CD4-positive, alpha-beta T cell (primary cell): ENCODE measurements at regions of chr16 and their contacts with region 1.

Region 1: GRCh38 chr16:4253394-4254150 is 11.7 kb upstream of the SRL start:
- DNase-seq: peak; percentile 99 to 100 (median 99)
- ATAC-seq: peak; percentile 94
- H3K4me3 ChIP-seq: peak overlapping the region; percentile 91
- H3K4me3 Mint-ChIP-seq: peak overlapping the region; percentile 96
- H3K27ac ChIP-seq: peak overlapping the region; percentile 86 to 88
- H3K27ac Mint-ChIP-seq: peak overlapping the region; percentile 96
- H3K4me1 ChIP-seq: peaks cover 18% of the 10 kb centered on the region
- H3K4me1 Mint-ChIP-seq: peaks cover 10% of the 10 kb centered on the region
- H3K27me3 ChIP-seq: no peaks in the 10 kb centered on the region
- H3K27me3 Mint-ChIP-seq: no peaks in the 10 kb centered on the region
- CTCF ChIP-seq: no peak

Region 2: GRCh38 chr16:3717235-3718018 is 536.1 kb before region 1 on chr16 and contains the start of gene TRAP1:
- CTCF ChIA-PET with region 1: no interaction called
- POLR2A ChIA-PET with region 1: interaction called, 12 read pairs
- intact Hi-C with region 1: loop called in 1 of 2 experiments (anchors 10 kb)
- DNase-seq: peak; percentile 83 to 96 (median 91)
- ATAC-seq: peak; percentile 98
- H3K4me3 ChIP-seq: peak within 1 kb of the TSS; percentile 98
- H3K4me3 Mint-ChIP-seq: peak within 1 kb of the TSS; percentile 92
- H3K27ac ChIP-seq: peak within 1 kb of the TSS; percentile 72 to 92
- H3K27ac Mint-ChIP-seq: peak within 1 kb of the TSS; percentile 89
- H3K4me1 ChIP-seq: peaks cover 33% of the 10 kb centered on the region
- H3K4me1 Mint-ChIP-seq: peaks cover 31% of the 10 kb centered on the region
- H3K27me3 ChIP-seq: no peaks in the 10 kb centered on the region
- H3K27me3 Mint-ChIP-seq: no peaks in the 10 kb centered on the region
- CTCF ChIP-seq: no peak
- total RNA-seq, gene TRAP1: 68.0 to 75.9 TPM

Region 3: DNA sequence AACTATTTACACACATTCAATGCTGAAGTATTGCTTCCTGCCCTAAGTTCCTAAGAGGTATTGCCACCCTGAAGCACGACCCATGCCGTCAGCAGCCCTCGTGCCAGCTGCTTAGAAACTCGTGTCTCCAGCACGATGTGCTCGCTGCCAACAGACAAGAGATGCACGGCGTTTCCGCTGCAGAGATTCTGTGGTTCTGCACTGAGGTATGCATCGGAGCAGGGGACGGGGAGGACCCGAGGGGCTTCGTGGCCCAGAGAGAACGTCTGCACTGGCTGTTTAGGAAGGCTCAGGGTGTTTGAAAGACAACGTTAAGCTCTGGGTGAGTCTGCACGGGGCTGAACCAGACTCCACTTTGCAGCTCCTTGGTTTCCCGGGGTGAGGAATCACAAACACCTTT is 290.4 kb before region 1 on chr16:
- CTCF ChIA-PET with region 1: interaction called, 10 read pairs
- POLR2A ChIA-PET with region 1: interaction called, 4 read pairs
- intact Hi-C with region 1: no loop called
- DNase-seq: peak in 13 of 14 experiments; percentile 14 to 89 (median 46)
- ATAC-seq: peak; percentile 78
- H3K4me3 ChIP-seq: no peak overlapping the region
- H3K4me3 Mint-ChIP-seq: peak overlapping the region; percentile 45
- H3K27ac ChIP-seq: peak overlapping the region in 1 of 2 donors; percentile 52
- H3K27ac Mint-ChIP-seq: peak overlapping the region; percentile 93
- H3K4me1 ChIP-seq: peaks cover 31% of the 10 kb centered on the region
- H3K4me1 Mint-ChIP-seq: peaks cover 28% of the 10 kb centered on the region
- H3K27me3 ChIP-seq: peaks cover 0 to 3% of the 10 kb centered on the region in 2 experiments
- H3K27me3 Mint-ChIP-seq: peaks cover 4% of the 10 kb centered on the region
- CTCF ChIP-seq: no peak

Region 4: DNA sequence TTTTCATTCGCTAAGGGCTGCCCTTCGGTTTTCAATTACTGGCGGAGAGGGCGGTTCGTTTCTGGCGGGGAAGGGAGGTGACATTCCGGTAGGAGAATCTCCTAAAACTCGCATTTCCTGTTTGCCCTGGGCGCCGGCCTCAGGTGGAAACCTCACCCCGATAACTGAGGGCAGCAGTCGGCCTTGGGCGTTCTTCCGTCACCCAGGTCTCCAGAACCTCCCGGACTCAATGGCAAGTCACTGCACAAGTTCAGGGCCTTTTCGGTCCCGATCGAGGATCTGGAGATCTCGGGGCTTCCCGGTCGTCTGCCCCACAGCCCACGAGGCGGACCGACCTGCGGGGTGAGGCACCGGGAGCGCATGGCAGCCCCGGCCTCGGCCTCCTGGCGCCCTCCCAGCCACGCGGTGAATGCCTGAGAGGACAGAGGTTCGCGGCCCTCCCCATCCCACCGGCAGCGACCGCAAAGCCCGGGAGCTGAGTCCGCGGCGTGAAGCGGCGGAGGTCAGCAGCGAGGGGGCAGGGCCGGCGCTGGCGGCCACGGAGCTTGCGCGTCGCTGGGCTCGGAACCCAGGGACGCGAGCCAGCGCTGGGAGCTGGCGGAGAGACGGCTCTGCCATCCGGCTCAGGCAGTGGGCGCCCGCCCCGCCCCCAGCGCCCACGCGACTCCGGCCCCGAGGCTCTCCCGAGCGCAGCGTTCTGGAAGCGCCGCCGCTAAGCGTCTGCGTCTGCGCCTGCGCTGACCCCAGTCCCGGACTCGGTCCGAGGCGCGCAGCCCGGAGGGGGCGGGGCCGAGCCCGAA is 70.1 kb before region 1 on chr16:
- CTCF ChIA-PET with region 1: interaction called, 3 read pairs
- POLR2A ChIA-PET with region 1: interaction called, 5 read pairs
- intact Hi-C with region 1: loop called in 1 of 2 experiments (anchors 5 kb)
- DNase-seq: peak; percentile 48 to 91 (median 81)
- ATAC-seq: peak; percentile 83
- H3K4me3 ChIP-seq: peak overlapping the region; percentile 64
- H3K4me3 Mint-ChIP-seq: peak overlapping the region; percentile 80
- H3K27ac ChIP-seq: no peak overlapping the region
- H3K27ac Mint-ChIP-seq: no peak overlapping the region
- H3K4me1 ChIP-seq: peaks cover 17% of the 10 kb centered on the region
- H3K4me1 Mint-ChIP-seq: peaks cover 9% of the 10 kb centered on the region
- H3K27me3 ChIP-seq: no peaks in the 10 kb centered on the region
- H3K27me3 Mint-ChIP-seq: no peaks in the 10 kb centered on the region
- CTCF ChIP-seq: no peak

Region 5: GRCh38 chr16:4307215-4308037 is 53.9 kb after region 1 on chr16:
- CTCF ChIA-PET with region 1: interaction called, 18 read pairs
- POLR2A ChIA-PET with region 1: interaction called, 21 read pairs
- intact Hi-C with region 1: loop called in 1 of 2 experiments (anchors 2 kb)
- DNase-seq: peak; percentile 91 to 99 (median 96)
- ATAC-seq: peak; percentile 87
- H3K4me3 ChIP-seq: peak overlapping the region; percentile 72
- H3K4me3 Mint-ChIP-seq: peak overlapping the region; percentile 84
- H3K27ac ChIP-seq: peak overlapping the region; percentile 82 to 90
- H3K27ac Mint-ChIP-seq: peak overlapping the region; percentile 96
- H3K4me1 ChIP-seq: peaks cover 31% of the 10 kb centered on the region
- H3K4me1 Mint-ChIP-seq: peaks cover 15% of the 10 kb centered on the region
- H3K27me3 ChIP-seq: no peaks in the 10 kb centered on the region
- H3K27me3 Mint-ChIP-seq: no peaks in the 10 kb centered on the region
- CTCF ChIP-seq: no peak

Region 6: DNA sequence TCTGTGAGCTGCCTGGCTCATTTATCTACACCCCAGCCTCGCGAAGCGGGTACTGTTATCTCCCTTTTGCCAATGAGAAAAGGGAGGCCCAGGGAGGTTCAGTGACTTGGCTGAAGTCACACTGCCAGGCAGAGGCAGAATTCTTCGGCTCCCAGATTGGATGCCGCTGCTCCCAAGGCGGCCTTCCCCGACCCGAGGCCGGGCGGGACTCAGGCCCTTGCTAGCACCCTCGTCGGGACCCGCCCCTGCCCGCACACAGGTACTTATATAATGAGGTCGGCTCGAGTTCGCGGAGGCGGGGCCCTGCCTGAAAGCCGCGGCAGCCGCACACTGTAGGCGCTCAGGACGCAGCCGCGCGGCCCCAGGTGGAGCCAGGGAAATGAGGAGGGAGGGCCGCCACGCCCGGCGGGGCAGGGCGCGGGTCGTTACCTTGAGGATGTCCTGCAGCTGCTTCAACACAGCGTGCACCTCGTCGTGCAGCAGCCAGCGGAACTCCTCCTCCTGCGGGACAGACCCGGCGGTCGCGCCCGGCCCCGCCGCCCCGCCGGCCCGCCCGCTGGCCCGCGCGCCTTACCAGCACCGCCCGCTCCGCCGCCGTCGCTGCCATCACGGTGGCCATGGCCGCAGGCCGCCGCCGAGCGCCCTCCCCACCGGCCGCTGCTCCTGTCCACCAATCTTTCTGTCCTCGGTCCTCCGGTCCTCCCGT is 548.5 kb after region 1 on chr16 and contains the start of gene ROGDI:
- CTCF ChIA-PET with region 1: no interaction called
- POLR2A ChIA-PET with region 1: no interaction called
- intact Hi-C with region 1: no loop called
- DNase-seq: peak; percentile 64 to 95 (median 83)
- ATAC-seq: peak; percentile 72
- H3K4me3 ChIP-seq: peak within 1 kb of the TSS; percentile 61
- H3K4me3 Mint-ChIP-seq: peak within 1 kb of the TSS; percentile 93
- H3K27ac ChIP-seq: peak within 1 kb of the TSS; percentile 91 to 94
- H3K27ac Mint-ChIP-seq: peak within 1 kb of the TSS; percentile 96
- H3K4me1 ChIP-seq: peaks cover 24% of the 10 kb centered on the region
- H3K4me1 Mint-ChIP-seq: peaks cover 22% of the 10 kb centered on the region
- H3K27me3 ChIP-seq: no peaks in the 10 kb centered on the region
- H3K27me3 Mint-ChIP-seq: no peaks in the 10 kb centered on the region
- CTCF ChIP-seq: no peak
- total RNA-seq, gene ROGDI: 9.4 to 11.0 TPM

Region 7: DNA sequence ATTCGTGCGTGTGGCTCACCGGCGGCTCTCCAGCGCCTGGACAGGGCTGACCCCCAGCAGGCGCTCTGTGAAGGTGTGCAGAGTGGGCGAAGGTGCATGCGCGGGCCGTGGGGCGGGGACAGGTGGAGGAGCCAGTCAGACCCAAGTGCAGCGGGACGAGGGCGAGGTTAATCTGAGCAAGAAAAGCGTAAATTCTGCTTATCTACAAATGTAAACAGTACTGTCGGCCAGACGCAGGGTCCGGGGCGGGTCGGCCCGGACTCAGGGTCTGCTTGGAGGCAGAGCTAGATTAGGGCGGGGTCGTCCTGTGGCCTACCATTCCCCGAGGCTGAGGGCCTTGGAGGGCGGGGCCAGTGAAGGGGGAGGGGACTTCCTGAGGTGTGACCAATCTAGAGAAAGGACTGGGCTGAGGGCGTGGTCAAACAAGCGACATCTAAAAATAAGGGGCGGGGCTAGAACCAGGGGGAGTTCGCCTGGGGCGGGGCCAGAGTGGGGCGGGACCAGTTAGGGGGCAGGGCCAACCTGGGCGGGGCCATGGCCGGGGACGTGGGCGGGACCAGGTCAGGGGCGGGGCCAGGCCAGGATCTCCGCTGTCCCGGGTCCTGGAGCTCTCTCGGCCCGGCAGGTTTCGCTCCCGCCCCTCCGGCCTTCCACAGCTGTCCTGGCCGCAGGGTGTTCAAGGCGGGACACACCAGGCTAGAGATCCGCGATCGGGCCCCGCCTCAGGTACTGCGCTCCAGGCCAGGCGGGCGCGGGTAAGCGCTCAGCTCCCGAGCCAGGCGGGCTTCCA is 704.3 kb after region 1 on chr16 and contains the start of gene SEC14L5:
- CTCF ChIA-PET with region 1: no interaction called
- POLR2A ChIA-PET with region 1: no interaction called
- intact Hi-C with region 1: loop called in 1 of 2 experiments (anchors 2 kb)
- DNase-seq: peak; percentile 79 to 95 (median 89)
- ATAC-seq: peak; percentile 93
- H3K4me3 ChIP-seq: peak within 1 kb of the TSS; percentile 52
- H3K4me3 Mint-ChIP-seq: peak within 1 kb of the TSS; percentile 86
- H3K27ac ChIP-seq: no peak within 1 kb of the TSS
- H3K27ac Mint-ChIP-seq: no peak within 1 kb of the TSS
- H3K4me1 ChIP-seq: peaks cover 26% of the 10 kb centered on the region
- H3K4me1 Mint-ChIP-seq: peaks cover 24% of the 10 kb centered on the region
- H3K27me3 ChIP-seq: peaks cover 13 to 16% of the 10 kb centered on the region in 2 experiments
- H3K27me3 Mint-ChIP-seq: peaks cover 53% of the 10 kb centered on the region
- CTCF ChIP-seq: no peak
- total RNA-seq, gene SEC14L5: not detected